AG04450 (cell line): ENCODE measurements at regions of chr5 and their contacts with region 1.

Region 1: DNA sequence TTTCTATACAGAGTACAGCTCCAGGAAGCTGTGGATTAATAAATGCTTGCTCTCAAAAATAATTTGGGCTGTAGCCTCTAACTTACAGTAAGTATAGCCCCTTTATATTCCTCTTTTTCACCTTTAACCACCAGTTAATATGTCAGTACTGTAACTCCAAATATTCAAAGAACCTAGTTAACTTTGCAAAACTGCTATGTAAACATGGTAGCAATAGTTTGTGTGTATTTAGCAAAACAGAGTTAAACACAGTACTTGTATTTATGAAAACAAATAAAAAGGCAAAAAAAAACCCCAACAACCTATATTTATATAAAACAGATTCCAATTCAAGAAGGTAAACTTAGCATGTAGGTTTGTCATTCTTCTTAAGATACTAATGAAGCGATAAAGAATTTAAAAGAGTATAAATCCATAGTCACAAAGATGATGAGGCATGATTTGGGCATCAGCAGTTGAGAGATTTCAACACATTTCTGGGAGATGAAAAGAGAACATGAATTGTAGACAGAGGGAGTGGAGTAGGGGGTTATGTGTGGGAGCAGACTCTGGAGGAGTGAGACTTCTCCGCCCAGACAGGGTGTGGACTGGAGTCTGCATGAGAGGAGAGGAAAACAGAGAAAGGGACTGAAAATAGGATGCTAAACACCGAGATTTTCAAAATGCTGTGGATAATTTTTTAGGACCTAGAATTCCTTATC is 47.0 kb upstream of the F2RL1 start:
- DNase-seq: no peak
- H3K4me3 ChIP-seq: no peak overlapping the region
- H3K27ac ChIP-seq: no peak overlapping the region
- H3K27me3 ChIP-seq: no peaks in the 10 kb centered on the region
- CTCF ChIP-seq: no peak

Region 2: GRCh38 chr5:76582230-76583162 is 189.4 kb before region 1 on chr5:
- CTCF ChIA-PET with region 1: interaction called, 19 read pairs
- POLR2A ChIA-PET with region 1: no interaction called
- DNase-seq: no peak
- H3K4me3 ChIP-seq: no peak overlapping the region
- H3K27ac ChIP-seq: no peak overlapping the region
- H3K27me3 ChIP-seq: no peaks in the 10 kb centered on the region
- CTCF ChIP-seq: no peak

Region 3: DNA sequence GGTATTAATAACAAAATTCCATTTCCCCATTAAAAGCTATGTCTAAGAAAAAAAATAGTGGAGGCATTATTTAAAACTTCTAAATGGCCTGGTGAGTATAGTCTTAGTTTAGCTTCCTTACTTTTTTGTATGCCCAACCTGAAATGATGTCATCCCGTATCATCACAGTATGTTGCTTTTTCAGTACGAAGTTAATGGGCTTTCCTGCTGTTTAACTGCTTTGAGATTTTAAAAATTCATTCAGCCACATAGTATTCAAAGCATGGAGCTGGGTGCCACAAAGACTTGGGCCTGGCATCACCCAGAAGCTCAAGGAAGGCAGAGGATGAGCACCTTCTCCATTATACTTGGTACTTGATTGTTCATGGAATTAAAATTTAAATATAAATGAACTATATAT is 156.1 kb before region 1 on chr5:
- CTCF ChIA-PET with region 1: interaction called, 12 read pairs
- POLR2A ChIA-PET with region 1: no interaction called
- DNase-seq: no peak
- H3K4me3 ChIP-seq: no peak overlapping the region
- H3K27ac ChIP-seq: no peak overlapping the region
- H3K27me3 ChIP-seq: no peaks in the 10 kb centered on the region
- CTCF ChIP-seq: no peak

Region 4: DNA sequence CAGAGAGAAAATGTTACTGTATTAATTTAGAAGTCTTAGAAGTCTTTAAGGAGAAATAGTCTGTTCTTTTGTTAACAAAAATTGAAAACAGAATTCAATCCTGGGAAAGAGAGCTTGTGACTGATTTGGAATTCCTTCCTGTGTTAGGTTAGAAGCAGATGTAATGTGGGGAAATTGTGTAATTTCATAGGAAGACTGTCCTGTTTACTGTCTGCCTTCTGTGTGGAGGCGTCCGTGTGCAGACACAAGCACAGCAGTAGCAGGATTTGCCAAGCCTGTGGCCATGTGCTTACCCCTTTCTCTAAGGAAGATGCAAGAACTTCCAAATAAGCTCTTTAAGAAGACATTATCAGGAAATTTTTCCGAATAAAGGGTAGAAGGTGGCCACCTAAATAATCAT is 92.6 kb before region 1 on chr5:
- CTCF ChIA-PET with region 1: interaction called, 12 read pairs
- POLR2A ChIA-PET with region 1: no interaction called
- DNase-seq: no peak
- H3K4me3 ChIP-seq: no peak overlapping the region
- H3K27ac ChIP-seq: no peak overlapping the region
- H3K27me3 ChIP-seq: no peaks in the 10 kb centered on the region
- CTCF ChIP-seq: no peak

Region 5: GRCh38 chr5:76715736-76716455 is 56.0 kb before region 1 on chr5 and contains the start of gene F2R:
- CTCF ChIA-PET with region 1: interaction called, 22 read pairs
- POLR2A ChIA-PET with region 1: interaction called, 3 read pairs
- DNase-seq: no peak
- H3K4me3 ChIP-seq: peak within 1 kb of the TSS; percentile 97
- H3K27ac ChIP-seq: peak within 1 kb of the TSS; percentile 57
- H3K27me3 ChIP-seq: no peaks in the 10 kb centered on the region
- CTCF ChIP-seq: peak; percentile 53
- polyA plus RNA-seq, gene F2R: 289 and 324 TPM in 2 replicates

Region 6: DNA sequence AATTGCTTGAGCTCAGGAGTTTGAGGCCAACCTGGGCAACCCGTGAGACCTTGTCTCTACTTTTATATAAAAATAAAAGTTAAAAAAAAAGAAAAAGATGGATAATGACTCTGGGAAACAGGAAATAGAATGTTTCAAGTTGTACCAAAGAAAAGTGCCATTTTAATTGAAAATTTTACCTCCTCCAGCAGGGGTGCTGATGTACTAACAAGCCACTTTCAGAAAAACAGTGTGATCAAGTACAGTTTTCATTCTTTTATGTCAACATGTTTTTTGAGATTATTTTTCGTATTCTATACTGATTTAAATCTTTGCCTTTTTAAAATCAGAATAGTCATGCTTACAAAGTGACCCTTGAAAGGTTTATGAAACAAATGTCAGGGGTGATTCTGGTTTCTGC is 25.2 kb before region 1 on chr5:
- CTCF ChIA-PET with region 1: interaction called, 45 read pairs
- POLR2A ChIA-PET with region 1: no interaction called
- DNase-seq: no peak
- H3K4me3 ChIP-seq: no peak overlapping the region
- H3K27ac ChIP-seq: no peak overlapping the region
- H3K27me3 ChIP-seq: no peaks in the 10 kb centered on the region
- CTCF ChIP-seq: no peak

Region 7: DNA sequence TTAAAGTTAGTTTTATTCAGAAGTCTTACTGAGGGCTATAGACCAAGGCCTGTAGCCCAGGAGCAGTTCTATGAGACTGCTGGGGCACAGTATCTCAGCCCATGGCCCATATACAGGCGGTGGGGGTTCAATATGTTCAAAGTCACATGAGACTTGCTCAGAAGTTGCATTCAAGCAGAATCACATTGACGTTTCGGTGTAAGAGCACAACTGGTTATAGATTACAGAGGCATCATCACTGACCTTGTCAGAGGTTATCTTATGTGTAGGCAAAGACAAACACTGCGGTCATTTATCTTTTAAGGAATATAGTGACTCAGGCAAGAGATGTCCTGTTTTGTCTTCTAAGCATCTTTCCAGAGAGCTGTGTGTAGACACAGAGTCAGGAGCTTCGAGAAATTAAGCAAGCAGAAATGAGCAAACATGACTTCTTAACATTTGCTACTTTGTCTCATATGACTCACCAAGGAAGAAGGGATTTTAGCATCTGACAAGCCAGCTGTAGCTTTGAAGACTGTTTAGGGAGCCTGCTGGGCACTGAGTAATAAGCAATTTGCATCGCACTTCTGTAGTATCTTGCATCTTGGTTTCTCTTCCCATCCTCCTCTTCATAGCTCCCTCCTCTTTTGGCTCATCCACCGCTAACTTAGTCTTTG is 34.1 kb after region 1 on chr5:
- CTCF ChIA-PET with region 1: interaction called, 27 read pairs
- POLR2A ChIA-PET with region 1: no interaction called
- DNase-seq: peak; percentile 96
- H3K4me3 ChIP-seq: peak overlapping the region; percentile 12; the same call in 1 of the 2 replicates
- H3K27ac ChIP-seq: peak overlapping the region; percentile 89
- H3K27me3 ChIP-seq: no peaks in the 10 kb centered on the region
- CTCF ChIP-seq: no peak